PC-9 (cell line): ENCODE measurements at regions of chr2 and their contacts with region 1.

Region 1: DNA sequence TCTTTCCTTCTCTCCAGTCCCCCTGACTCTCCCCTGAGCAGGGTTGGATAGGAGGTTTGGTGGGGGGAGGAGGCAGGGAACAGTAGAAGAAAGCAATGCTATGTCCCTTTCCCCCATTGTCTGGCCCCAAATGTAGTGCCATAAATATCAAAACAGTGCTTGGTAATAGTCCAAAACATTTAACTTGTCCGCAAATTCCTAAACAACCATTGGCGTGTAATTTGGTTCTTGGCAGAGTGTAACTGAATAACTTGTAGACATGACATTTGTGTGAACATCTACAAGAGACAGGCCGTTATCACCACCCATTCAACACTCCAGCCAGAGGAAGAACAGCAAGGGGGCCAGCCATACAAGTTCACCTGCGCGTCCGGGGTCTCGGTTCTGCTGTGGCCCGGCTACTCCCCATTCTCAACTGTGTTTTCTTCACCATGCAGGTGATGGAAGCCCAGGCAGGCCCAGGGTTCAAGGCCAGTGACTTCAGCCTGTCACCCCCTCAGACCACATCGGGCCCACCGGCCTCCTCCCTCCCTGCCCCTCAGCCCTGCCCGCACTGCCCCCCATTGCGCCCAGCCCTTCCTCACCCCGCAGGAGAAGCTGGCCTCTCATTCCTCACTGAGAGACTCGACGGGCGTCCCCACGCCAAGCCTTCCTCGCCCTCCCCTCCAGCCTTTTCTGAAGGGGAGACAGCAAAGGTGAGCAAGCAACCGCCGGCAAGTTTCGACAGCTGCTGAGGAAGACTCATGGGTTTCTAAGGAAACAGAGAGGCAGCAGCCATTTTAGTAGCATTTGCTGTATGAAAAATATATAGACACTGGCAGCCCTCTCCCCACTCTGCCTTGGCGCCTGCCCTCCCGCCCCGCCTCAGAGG is 699 bp upstream of the RAPGEF4 start:
- DNase-seq: no peak
- H3K4me3 ChIP-seq: peak overlapping the region; percentile 40; the same call in 1 of the 2 replicates
- H3K27ac ChIP-seq: no peak overlapping the region
- H3K4me1 ChIP-seq: no peaks in the 10 kb centered on the region
- H3K27me3 ChIP-seq: 0 out of 2 replicates have a peak, but pooled peaks cover 2% of the 10 kb centered on the region
- CTCF ChIP-seq: no peak

Region 2: GRCh38 chr2:172788871-172789270 is 53.9 kb after region 1 on chr2:
- CTCF ChIA-PET with region 1: no interaction called
- POLR2A ChIA-PET with region 1: no interaction called
- intact Hi-C with region 1: loop called (anchors 5 kb)
- DNase-seq: no peak
- H3K4me3 ChIP-seq: no peak overlapping the region
- H3K27ac ChIP-seq: no peak overlapping the region
- H3K4me1 ChIP-seq: peaks cover 3% of the 10 kb centered on the region
- H3K27me3 ChIP-seq: no peaks in the 10 kb centered on the region
- CTCF ChIP-seq: no peak